Caco-2 (cell line): ENCODE measurements at regions of chr10 and their contacts with region 1.

Region 1: DNA sequence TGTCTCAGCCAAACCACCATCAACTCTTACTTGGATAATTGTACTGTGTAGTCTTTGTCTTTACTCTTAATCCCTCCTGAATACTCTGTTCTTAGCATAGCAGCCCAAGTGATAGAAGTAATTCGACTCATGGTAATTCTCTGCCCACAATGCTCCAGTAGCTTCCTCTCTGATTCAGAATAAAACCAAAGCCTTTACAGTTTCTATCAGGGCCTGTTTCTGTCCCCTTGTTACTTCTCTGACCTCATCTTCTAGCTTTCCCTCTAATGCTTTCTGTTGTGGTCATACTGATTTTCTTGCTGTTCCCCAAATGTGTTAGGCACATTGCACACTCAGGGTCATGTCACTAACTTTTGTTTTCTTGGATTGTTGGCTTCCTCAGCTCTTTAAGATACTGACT is 8.0 kb downstream of the ZNF518A start:
- DNase-seq: no peak
- H3K4me3 ChIP-seq: no peak overlapping the region
- H3K4me3 Mint-ChIP-seq: no peak overlapping the region
- H3K27ac Mint-ChIP-seq: no peak overlapping the region
- H3K4me1 ChIP-seq: no peaks in the 10 kb centered on the region
- H3K4me1 Mint-ChIP-seq: no peaks in the 10 kb centered on the region
- H3K27me3 ChIP-seq: no peaks in the 10 kb centered on the region
- H3K27me3 Mint-ChIP-seq: no peaks in the 10 kb centered on the region
- CTCF ChIP-seq: no peak

Region 2: GRCh38 chr10:96188916-96189315 is 50.8 kb after region 1 on chr10:
- CTCF ChIA-PET with region 1: no interaction called
- POLR2A ChIA-PET with region 1: interaction called, 12 read pairs
- intact Hi-C with region 1: no loop called
- DNase-seq: no peak
- H3K4me3 ChIP-seq: no peak overlapping the region
- H3K4me3 Mint-ChIP-seq: no peak overlapping the region
- H3K27ac Mint-ChIP-seq: no peak overlapping the region
- H3K4me1 ChIP-seq: 0 out of 2 replicates have a peak, but pooled peaks cover 3% of the 10 kb centered on the region
- H3K4me1 Mint-ChIP-seq: no peaks in the 10 kb centered on the region
- H3K27me3 ChIP-seq: no peaks in the 10 kb centered on the region
- H3K27me3 Mint-ChIP-seq: peaks cover 6% of the 10 kb centered on the region
- CTCF ChIP-seq: no peak